Panc1 (cell line): ENCODE measurements at regions of chr7 and their contacts with region 1.

Region 1: DNA sequence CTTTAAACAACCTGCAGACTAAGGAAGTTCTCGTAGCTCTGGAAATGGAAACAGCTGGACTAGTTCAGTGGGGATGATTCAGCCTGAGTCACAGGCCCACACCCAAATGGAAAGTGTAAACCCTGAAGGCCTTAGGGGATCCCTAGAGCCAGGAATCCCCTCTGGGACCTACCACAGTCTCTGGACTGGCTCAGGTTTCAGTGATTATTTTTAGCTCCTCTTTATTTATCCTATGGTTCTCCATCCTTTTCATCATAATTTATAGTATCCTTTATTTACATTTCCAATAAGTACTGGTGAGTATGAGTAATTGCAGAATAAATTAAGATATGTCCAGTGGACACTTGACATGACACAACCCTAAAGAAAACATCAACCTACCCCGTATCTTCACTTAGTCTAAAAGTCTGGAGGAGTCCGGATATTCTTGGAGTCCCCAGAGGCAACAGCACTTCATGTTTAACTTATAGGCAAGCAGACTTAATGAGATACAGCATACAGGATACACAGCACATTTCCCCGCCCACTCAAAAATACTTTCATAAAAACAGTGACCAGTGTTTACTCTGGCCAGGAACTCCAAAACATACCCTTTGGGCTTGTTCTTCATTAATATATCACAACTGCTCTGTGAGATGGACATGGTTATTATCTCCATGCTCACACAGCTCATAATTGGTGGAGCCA is 28.4 kb upstream of the SEMA3E start:
- DNase-seq: peak; percentile 95
- ATAC-seq: peak; percentile 95
- H3K4me3 ChIP-seq: no peak overlapping the region
- H3K27ac ChIP-seq: no peak overlapping the region
- H3K4me1 ChIP-seq: peaks cover 10% of the 10 kb centered on the region
- H3K27me3 ChIP-seq: no peaks in the 10 kb centered on the region
- CTCF ChIP-seq: no peak

Region 2: DNA sequence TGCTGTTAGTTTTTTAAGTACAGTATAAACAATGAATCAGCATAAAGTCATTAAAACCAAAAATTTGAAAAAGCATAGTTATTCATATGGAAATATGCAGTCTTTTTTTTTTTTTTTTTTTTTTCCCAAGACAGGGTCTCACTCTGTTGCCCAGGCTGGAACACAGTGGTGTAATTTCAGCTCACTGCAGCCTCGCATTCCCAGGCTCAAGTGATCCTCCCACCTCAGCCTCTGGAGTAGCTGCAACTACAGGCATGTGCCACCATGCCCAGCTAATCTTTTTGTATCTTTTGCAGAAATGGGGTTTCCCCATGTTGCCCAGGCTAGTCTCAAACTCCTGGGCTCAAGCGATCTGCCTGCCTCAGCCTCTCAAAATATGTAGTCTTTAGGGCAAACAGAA is 210.4 kb before region 1 on chr7:
- CTCF ChIA-PET with region 1: no interaction called
- POLR2A ChIA-PET with region 1: no interaction called
- in situ Hi-C with region 1: no loop called
- intact Hi-C with region 1: no loop called
- DNase-seq: no peak
- ATAC-seq: no peak
- H3K4me3 ChIP-seq: no peak overlapping the region
- H3K27ac ChIP-seq: peak overlapping the region; percentile 18; the same call in 1 of the 2 replicates
- H3K4me1 ChIP-seq: peaks cover 16% of the 10 kb centered on the region
- H3K27me3 ChIP-seq: no peaks in the 10 kb centered on the region
- CTCF ChIP-seq: no peak

Region 3: GRCh38 chr7:83697814-83698530 is 20.6 kb after region 1 on chr7:
- CTCF ChIA-PET with region 1: no interaction called
- POLR2A ChIA-PET with region 1: no interaction called
- in situ Hi-C with region 1: no loop called
- intact Hi-C with region 1: no loop called
- DNase-seq: no peak
- ATAC-seq: no peak
- H3K4me3 ChIP-seq: no peak overlapping the region
- H3K27ac ChIP-seq: no peak overlapping the region
- H3K4me1 ChIP-seq: no peaks in the 10 kb centered on the region
- H3K27me3 ChIP-seq: no peaks in the 10 kb centered on the region
- CTCF ChIP-seq: no peak

Region 4: GRCh38 chr7:83751217-83751616 is 73.9 kb after region 1 on chr7:
- CTCF ChIA-PET with region 1: no interaction called
- POLR2A ChIA-PET with region 1: no interaction called
- in situ Hi-C with region 1: no loop called
- intact Hi-C with region 1: no loop called
- DNase-seq: no peak
- ATAC-seq: no peak
- H3K4me3 ChIP-seq: no peak overlapping the region
- H3K27ac ChIP-seq: no peak overlapping the region
- H3K4me1 ChIP-seq: no peaks in the 10 kb centered on the region
- H3K27me3 ChIP-seq: no peaks in the 10 kb centered on the region
- CTCF ChIP-seq: no peak

Region 5: GRCh38 chr7:84123965-84124547 is 446.7 kb after region 1 on chr7:
- CTCF ChIA-PET with region 1: no interaction called
- POLR2A ChIA-PET with region 1: interaction called, 15 read pairs
- in situ Hi-C with region 1: no loop called
- intact Hi-C with region 1: no loop called
- DNase-seq: peak; percentile 22
- ATAC-seq: peak; percentile 87
- H3K4me3 ChIP-seq: peak overlapping the region; percentile 3 to 33
- H3K27ac ChIP-seq: peak overlapping the region; percentile 75
- H3K4me1 ChIP-seq: peaks cover 9% of the 10 kb centered on the region
- H3K27me3 ChIP-seq: no peaks in the 10 kb centered on the region
- CTCF ChIP-seq: no peak